Ascending aorta (tissue), 2 donors: ENCODE measurements at regions of chr21 and their contacts with region 1.

Region 1: GRCh38 chr21:35324372-35325220 is 275.5 kb upstream of the RUNX1 start:
- DNase-seq: no peak
- H3K4me3 ChIP-seq: peak overlapping the region in 1 of 2 donors; percentile 37
- H3K27ac ChIP-seq: peak overlapping the region; percentile 77 to 80
- H3K4me1 ChIP-seq: peaks cover 18 to 21% of the 10 kb centered on the region in 2 donors
- H3K27me3 ChIP-seq: no peaks in the 10 kb centered on the region
- CTCF ChIP-seq: no peak

Region 2: GRCh38 chr21:35239811-35240219 is 84.8 kb before region 1 on chr21:
- intact Hi-C with region 1: no loop called
- DNase-seq: no peak
- H3K4me3 ChIP-seq: peak overlapping the region in 1 of 2 donors; percentile 2
- H3K27ac ChIP-seq: no peak overlapping the region
- H3K4me1 ChIP-seq: peaks cover 0 to 7% of the 10 kb centered on the region in 2 donors
- H3K27me3 ChIP-seq: no peaks in the 10 kb centered on the region
- CTCF ChIP-seq: no peak

Region 3: GRCh38 chr21:35256467-35256988 is 68.1 kb before region 1 on chr21:
- intact Hi-C with region 1: loop called (anchors 2 kb)
- DNase-seq: peak; percentile 33 to 89
- H3K4me3 ChIP-seq: peak overlapping the region; percentile 25 to 42
- H3K27ac ChIP-seq: peak overlapping the region in 1 of 2 donors; percentile 52
- H3K4me1 ChIP-seq: peaks cover 0 to 15% of the 10 kb centered on the region in 2 donors
- H3K27me3 ChIP-seq: no peaks in the 10 kb centered on the region
- CTCF ChIP-seq: no peak